Dorsolateral prefrontal cortex (tissue), 120 donors: ENCODE measurements at regions of chr5 and their contacts with region 1.

Region 1: DNA sequence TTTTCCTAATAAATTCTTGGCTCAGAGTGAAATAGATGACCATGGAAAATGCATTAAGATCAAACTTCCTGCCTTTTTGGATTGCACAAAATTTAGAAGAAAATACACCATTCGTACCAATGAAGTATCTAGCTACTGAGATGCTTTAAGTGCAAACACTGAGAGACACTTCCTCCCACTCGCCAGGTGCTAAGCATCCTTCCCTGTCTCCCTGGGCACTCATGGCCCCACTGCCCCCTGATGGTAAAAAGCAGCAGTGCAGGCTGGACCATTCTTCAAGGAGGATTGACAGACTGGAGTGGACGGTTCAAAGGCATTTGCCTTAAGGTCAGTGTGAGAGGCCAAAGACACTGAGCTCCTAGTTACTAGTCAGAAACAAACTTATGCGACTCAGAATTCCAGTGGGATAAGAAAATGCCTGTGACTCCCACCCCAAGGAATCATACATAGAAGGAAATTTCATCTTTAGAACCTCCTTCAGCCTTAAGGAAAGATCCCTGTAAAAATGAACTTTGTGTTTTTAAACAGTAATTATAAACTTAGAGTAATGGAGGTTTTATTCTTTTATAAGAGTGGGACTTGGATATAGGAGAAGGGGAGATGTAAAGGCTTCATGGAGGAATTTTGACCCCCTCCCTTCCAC is 86.0 kb upstream of the SLC30A5 start:
- DNase-seq: peak; percentile 52 to 90 (median 76)
- H3K4me3 ChIP-seq: peak overlapping the region in 2 of 59 donors; percentile 2 to 20
- H3K27ac ChIP-seq: peak overlapping the region in 56 of 59 donors; percentile 12 to 94 (median 76)
- H3K27me3 ChIP-seq: no peaks in the 10 kb centered on the region
- CTCF ChIP-seq: peak; percentile 58 to 88 (median 77)

Region 2: DNA sequence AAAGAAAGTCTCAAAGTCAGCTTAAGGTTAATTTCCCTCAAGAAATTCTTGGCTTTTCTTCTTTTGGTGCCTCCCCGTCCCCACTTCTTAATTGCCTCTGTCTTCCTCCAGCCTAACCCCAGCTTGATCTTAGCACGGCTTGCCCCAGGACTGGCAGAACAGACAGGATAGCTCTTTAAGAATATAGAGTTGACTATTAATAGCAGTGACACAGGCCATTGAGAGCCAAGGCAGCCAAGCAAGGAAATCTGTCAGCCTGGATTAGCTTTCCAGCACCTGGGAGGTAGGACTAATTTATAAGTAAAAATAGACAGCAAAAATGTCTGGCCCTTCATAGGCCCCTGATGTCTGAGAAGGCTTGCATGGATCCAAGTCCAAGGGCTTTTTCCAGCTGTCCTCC is 298.6 kb before region 1 on chr5:
- intact Hi-C with region 1: loop called in 1 of 2 experiments (anchors 2 kb)
- DNase-seq: no peak
- H3K4me3 ChIP-seq: no peak overlapping the region
- H3K27ac ChIP-seq: peak overlapping the region in 53 of 59 donors; percentile 6 to 90 (median 72)
- H3K27me3 ChIP-seq: no peaks in the 10 kb centered on the region
- CTCF ChIP-seq: no peak